Transverse colon (tissue), 4 donors: ENCODE measurements at regions of chr10 and their contacts with region 1.

Region 1: DNA sequence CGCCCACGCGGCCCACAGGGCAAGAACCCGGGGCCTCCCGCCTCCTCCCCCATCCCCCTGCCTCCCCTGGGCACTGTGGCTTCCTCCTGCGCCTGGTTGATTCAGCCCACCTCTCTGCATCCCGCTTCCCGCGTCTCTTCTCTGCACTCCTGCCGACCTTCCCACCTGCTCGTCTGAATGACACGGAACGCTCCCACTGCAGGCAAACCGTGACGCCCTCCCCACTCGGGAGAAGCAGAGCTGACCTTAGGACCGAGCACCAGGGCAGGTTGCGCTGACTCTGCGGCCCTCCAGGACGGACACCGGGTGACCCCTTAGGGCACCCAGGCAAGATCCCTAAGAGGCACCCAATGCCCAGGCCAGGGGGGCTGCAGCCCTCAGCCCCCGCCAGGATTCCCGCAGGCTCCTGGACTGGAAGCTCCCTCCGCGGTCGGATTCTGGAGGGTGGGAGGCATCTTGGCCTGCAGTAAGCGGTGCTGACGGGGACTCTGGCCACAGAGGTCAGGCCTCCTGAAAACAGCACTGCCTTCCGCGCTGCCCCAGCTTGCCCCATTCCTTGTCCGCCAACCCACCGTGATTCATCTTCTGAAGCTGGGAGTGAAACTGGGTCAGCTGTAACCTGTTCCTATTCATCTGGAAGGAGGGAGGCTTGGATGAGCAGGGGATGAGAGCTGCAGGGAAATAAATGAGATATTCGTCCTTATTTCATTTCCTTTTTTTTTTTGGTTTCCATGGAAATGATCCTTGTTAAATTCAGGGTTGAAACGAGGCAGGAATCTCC is 990 bp downstream of the CALML3 start:
- DNase-seq: peak; percentile 6
- H3K4me3 ChIP-seq: no peak overlapping the region
- H3K27ac ChIP-seq: no peak overlapping the region
- H3K4me1 ChIP-seq: peaks cover 0 to 9% (median 0%) of the 10 kb centered on the region in 4 donors
- H3K27me3 ChIP-seq: no peaks in the 10 kb centered on the region
- CTCF ChIP-seq: no peak
- EP300 ChIP-seq: no peak
- POLR2A ChIP-seq: no peak

Region 2: GRCh38 chr10:4013651-4014121 is 1512.1 kb before region 1 on chr10:
- in situ Hi-C with region 1: no loop called
- intact Hi-C with region 1: loop called (anchors 10 kb)
- DNase-seq: no peak
- H3K4me3 ChIP-seq: no peak overlapping the region
- H3K27ac ChIP-seq: no peak overlapping the region
- H3K4me1 ChIP-seq: no peaks in the 10 kb centered on the region
- H3K27me3 ChIP-seq: no peaks in the 10 kb centered on the region
- CTCF ChIP-seq: no peak
- EP300 ChIP-seq: no peak
- POLR2A ChIP-seq: no peak

Region 3: DNA sequence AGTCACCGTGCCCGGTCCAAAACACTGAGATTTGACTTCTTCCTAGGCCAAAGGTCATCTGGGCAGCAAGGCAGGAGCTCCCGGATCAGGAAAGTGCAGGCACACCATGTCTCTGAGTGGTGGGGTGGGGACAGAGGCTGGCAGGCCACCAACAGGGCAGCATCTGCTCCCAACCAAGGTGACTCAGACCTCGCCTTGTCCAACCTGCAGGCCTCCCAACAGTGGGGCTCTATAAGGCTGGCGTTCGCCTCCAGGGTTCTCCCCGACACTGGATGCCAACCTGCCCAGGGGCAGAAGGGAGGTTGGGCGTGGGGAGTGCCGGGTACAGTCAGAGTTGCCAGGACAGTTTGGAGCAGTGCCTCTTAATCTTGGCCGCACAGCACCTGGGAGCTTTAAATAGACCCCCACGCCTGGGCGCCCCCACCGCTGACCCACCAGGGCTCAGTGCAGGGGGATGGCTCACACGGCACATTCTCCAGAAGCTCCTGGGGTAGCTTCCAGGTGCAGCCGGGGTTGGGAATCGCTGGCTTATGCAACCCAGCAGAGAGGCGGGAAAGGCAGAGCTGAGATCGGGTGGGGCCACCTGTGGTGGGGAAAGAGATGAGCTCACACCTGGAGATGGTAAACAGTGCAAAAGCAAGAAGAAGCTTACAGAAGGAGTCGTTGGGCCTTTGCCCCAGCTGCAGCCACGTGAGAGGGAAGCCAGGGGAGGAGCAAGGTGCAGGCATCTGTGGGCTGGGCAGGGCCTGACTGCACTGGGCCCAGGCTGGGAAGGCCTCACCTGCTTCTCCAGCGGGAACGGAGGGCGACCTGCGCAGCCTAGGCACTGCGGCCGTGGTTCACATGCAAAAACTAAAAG is 37.2 kb before region 1 on chr10:
- in situ Hi-C with region 1: no loop called
- intact Hi-C with region 1: no loop called
- DNase-seq: peak; percentile 91
- H3K4me3 ChIP-seq: peak overlapping the region in 1 of 4 donors; percentile 12
- H3K27ac ChIP-seq: peak overlapping the region; percentile 91 to 95 (median 92)
- H3K4me1 ChIP-seq: peaks cover 0 to 17% (median 8%) of the 10 kb centered on the region in 4 donors
- H3K27me3 ChIP-seq: no peaks in the 10 kb centered on the region
- CTCF ChIP-seq: peak in 2 of 5 experiments; percentile 30 to 31
- EP300 ChIP-seq: peak; percentile 66
- POLR2A ChIP-seq: peak; percentile 82